Head of caudate nucleus (tissue), 42 donors: ENCODE measurements at regions of chr15 and their contacts with region 1.

Region 1: DNA sequence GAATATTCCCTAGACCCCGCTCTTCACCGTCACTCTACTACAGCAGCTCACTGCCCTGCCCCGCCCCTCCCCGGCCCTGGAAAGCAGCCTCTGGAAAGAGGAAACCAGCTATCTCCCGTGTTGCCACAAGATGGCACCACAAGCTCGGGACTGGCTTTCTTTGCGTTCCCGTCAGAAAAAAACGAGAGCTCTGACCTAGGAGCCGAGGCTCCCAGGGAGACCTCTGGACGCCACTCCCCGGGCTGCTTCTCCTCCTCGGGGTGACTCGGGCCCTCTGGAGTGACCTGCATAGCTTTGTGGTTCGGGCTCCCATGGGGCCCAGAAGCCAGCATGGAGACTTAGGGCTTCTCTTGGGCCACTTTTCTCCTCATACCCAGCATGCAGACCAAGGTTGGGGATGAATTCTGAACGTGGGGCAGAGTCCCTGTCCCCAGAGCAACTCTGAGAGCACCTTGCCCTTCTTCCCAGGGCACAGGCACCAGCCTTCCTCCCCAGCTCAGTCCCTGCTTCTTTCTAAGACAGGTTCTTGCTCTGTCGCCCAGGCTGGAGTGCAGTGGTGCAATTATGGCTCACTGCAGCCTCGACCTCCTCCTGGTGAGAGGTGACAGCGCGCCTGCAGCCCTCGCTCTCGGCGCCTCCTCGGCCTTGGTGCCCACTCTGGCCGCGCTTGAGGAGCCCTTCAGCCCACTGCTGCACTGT is 19.0 kb downstream of the STOML1 start:
- DNase-seq: peak; percentile 68 to 91 (median 83)

Region 2: DNA sequence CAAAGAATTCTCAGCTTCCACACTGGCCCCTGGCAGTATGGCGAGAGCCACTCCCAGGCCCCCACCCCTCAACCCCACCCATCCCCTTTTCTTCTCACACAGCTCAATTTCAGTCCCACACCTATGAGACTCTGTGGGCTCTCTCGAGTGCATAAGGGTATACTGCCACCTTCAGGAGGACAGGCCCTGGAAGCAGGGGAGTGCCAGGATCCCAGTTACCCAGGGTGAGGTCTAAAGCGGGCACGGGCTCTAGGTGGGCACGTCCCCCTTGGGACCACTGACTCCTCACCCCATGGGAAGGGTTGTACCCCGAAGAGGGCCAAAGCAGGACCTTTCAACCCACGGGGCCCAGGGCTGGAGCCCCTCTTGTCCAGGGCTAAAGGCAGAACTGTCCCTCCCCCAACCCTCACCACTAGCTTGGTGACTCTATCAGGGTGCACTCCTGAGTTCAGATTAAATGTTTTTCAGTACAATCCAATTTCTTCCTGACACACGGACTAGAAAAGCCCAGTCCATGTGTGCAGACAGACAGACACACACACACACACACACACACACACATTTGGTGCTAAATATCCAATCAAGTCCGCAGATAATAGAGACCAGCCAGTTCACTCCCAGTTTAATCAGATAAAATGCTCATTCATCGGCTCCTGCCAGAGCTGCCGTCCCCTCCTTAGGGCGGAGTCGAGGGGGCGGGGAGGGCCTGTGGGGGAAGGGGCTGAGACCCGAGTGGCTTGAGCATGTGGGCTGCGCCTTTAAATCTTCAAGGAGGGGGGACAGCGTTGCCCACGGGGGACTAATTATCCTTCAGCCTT is 334.9 kb after region 1 on chr15:
- intact Hi-C with region 1: loop called (anchors 10 kb)
- DNase-seq: peak; percentile 27 to 84 (median 64)